GM12878 (cell line): ENCODE measurements at regions of chr14 and their contacts with region 1.

Region 1: GRCh38 chr14:75522224-75522982 is at the start of gene BATF:
- DNase-seq: no peak
- ATAC-seq: peak; percentile 58
- H3K4me3 ChIP-seq: peak within 1 kb of the TSS; percentile 95
- H3K27ac ChIP-seq: peak within 1 kb of the TSS; percentile 93
- H3K4me1 ChIP-seq: peaks cover 29% of the 10 kb centered on the region
- H3K27me3 ChIP-seq: no peaks in the 10 kb centered on the region
- CTCF ChIP-seq: no peak
- EP300 ChIP-seq: peak; percentile 22 to 42; a peak in 1 of 4 replicates
- POLR2A ChIP-seq: peak; percentile 98
- RAD21 ChIP-seq: peak; percentile 25; the same call in 1 of the 2 replicates
- polyA plus RNA-seq, gene BATF: 10.0 to 30.9 TPM

Region 2: DNA sequence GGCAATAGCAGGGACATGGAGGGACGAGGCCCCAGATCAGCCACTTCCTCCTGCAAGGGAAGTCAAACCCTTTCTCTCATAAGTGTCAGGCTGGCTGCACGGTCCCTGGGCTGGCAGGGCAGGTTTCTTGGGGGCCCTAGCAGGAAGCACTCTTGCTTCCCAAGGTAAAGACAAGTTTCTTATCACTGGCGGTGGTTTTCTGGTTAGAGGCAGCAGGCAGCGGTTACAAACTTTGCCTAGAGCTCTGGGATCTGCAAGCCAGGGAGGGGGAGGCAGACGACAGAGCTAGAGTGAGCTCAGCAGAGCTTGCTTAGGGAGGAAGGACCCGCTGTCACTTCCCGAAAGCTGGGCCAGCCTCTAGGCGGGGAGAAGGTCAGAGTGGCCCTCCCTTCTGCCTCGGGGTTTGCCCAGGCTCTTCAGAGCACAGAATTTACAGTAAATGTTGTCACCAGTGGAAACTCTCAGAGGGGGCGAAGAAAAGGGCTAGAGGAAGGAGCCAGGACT is 20.2 kb after region 1 on chr14:
- CTCF ChIA-PET with region 1: interaction called, 481 read pairs
- POLR2A ChIA-PET with region 1: interaction called, 262 read pairs
- RAD21 ChIA-PET with region 1: interaction called, 419 read pairs
- SMC1A ChIA-PET with region 1: interaction called, 487 read pairs
- in situ Hi-C with region 1: no loop called
- intact Hi-C with region 1: loop called (anchors 2 kb)
- DNase-seq: no peak
- ATAC-seq: peak; percentile 84
- H3K4me3 ChIP-seq: peak overlapping the region; percentile 52
- H3K27ac ChIP-seq: peak overlapping the region; percentile 96
- H3K4me1 ChIP-seq: peaks cover 60% of the 10 kb centered on the region
- H3K27me3 ChIP-seq: no peaks in the 10 kb centered on the region
- CTCF ChIP-seq: no peak
- EP300 ChIP-seq: no peak
- POLR2A ChIP-seq: peak; percentile 64
- RAD21 ChIP-seq: no peak

Region 3: DNA sequence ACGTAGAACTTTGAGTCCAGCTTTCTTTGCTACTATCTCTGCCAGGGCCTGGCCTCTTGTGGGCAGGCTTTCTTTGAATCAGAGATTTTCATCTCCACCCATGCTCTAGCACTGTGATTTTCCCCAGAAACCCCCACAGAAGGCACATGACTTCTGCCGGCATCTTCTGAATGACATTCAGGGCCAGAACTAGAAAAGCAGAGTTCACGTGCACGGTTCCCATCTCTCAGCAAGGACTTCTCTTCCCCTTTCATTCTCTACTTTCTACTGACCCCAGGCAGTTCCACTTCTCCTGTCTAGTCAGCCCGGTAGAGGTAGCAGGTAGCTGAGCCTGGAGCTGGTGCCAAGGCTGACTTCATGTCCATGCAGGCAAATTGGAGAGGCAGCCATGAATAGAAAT is 26.8 kb after region 1 on chr14:
- CTCF ChIA-PET with region 1: interaction called, 481 read pairs
- POLR2A ChIA-PET with region 1: interaction called, 262 read pairs
- RAD21 ChIA-PET with region 1: interaction called, 419 read pairs
- SMC1A ChIA-PET with region 1: interaction called, 487 read pairs
- in situ Hi-C with region 1: no loop called
- intact Hi-C with region 1: no loop called
- DNase-seq: peak; percentile 79
- ATAC-seq: peak; percentile 87
- H3K4me3 ChIP-seq: no peak overlapping the region; the same call in 1 of the 2 replicates
- H3K27ac ChIP-seq: peak overlapping the region; percentile 53
- H3K4me1 ChIP-seq: peaks cover 23% of the 10 kb centered on the region
- H3K27me3 ChIP-seq: no peaks in the 10 kb centered on the region
- CTCF ChIP-seq: no peak
- EP300 ChIP-seq: peak in 1 of 2 experiments; percentile 49; a peak in 1 of 4 replicates
- POLR2A ChIP-seq: no peak
- RAD21 ChIP-seq: peak; percentile 7; the same call in 1 of the 2 replicates

Region 4: DNA sequence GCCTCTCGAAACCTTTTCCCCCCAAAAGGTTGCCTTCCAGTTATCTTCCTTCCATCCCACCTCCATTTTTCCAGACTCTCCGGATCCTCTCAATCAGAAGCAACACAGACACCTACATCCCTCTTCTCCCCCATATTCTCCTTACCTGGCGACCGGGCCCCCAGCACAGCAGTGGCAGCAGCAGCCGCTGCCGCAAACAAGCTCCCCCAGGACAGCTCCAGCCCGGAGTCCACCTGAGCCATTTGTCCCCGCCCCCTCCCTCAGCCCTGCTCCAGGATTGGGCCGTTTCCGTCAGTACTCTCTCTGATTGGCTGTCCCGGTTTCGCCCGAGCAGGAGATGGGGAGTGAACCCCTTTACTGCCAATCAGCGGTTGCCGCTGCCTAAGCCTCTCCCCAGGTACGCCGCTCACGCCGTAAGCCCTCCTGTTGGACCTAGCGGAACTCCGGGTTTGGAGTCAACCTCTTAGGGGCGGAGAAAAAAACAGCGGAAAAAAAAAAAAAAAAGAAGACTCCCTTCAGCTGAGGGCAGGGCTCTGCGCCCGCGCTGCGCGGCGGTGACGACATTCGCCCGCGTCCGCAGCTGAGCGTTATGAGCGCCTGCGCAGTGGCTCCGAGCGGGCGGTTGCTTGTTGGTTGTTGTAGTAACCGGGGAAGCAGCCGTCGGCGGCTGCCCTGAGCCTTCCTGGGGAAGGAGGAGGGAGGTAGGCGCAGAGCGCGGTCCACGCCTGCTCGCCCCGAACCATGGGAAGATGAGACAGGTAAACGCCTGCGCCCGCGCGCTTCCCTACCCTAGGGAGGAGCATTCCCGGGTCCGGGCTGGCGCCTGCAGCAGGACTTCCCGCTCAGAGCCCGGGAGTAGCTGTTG is 138.5 kb after region 1 on chr14 and contains the starts of genes ERG28 and TTLL5:
- CTCF ChIA-PET with region 1: interaction called, 52 read pairs
- POLR2A ChIA-PET with region 1: interaction called, 8 read pairs
- RAD21 ChIA-PET with region 1: interaction called, 8 read pairs
- SMC1A ChIA-PET with region 1: interaction called, 145 read pairs
- in situ Hi-C with region 1: no loop called
- intact Hi-C with region 1: loop called (anchors 2 kb)
- DNase-seq: peak; percentile 99
- ATAC-seq: peak; percentile 99
- H3K4me3 ChIP-seq: peak within 1 kb of the TSS; percentile 89
- H3K27ac ChIP-seq: peak within 1 kb of the TSS; percentile 49
- H3K4me1 ChIP-seq: no peaks in the 10 kb centered on the region
- H3K27me3 ChIP-seq: no peaks in the 10 kb centered on the region
- CTCF ChIP-seq: no peak
- EP300 ChIP-seq: 0 out of 4 replicates have a peak, but pooled peaks of 1 of the 2 experiments have one; percentile 16
- POLR2A ChIP-seq: peak; percentile 82
- RAD21 ChIP-seq: no peak
- polyA plus RNA-seq, gene ERG28: 52.6 to 67.0 TPM
- polyA plus RNA-seq, gene TTLL5: 3.2 to 5.2 TPM

Region 5: GRCh38 chr14:75751296-75751695 is 228.9 kb after region 1 on chr14:
- CTCF ChIA-PET with region 1: no interaction called
- POLR2A ChIA-PET with region 1: no interaction called
- RAD21 ChIA-PET with region 1: no interaction called
- SMC1A ChIA-PET with region 1: no interaction called
- in situ Hi-C with region 1: no loop called
- intact Hi-C with region 1: no loop called
- DNase-seq: no peak
- ATAC-seq: no peak
- H3K4me3 ChIP-seq: no peak overlapping the region
- H3K27ac ChIP-seq: no peak overlapping the region
- H3K4me1 ChIP-seq: no peaks in the 10 kb centered on the region
- H3K27me3 ChIP-seq: no peaks in the 10 kb centered on the region
- CTCF ChIP-seq: no peak
- EP300 ChIP-seq: no peak
- POLR2A ChIP-seq: no peak
- RAD21 ChIP-seq: no peak